Activated B cell treated with CpG ODN at 0.5 μM for 24 hours (primary cell): ENCODE measurements at regions of chr12 and their contacts with region 1.

Region 1: GRCh38 chr12:46675736-46676135 is 150.1 kb downstream of the SLC38A4 start:
- DNase-seq: no peak
- ATAC-seq: no peak
- H3K4me3 Mint-ChIP-seq: no peak overlapping the region
- H3K27ac Mint-ChIP-seq: no peak overlapping the region
- H3K4me1 Mint-ChIP-seq: no peaks in the 10 kb centered on the region
- H3K27me3 Mint-ChIP-seq: no peaks in the 10 kb centered on the region
- CTCF ChIP-seq: peak; percentile 31

Region 2: GRCh38 chr12:45872446-45872845 is 803.3 kb before region 1 on chr12:
- CTCF ChIA-PET with region 1: no interaction called
- POLR2A ChIA-PET with region 1: no interaction called
- intact Hi-C with region 1: no loop called
- DNase-seq: no peak
- ATAC-seq: no peak
- H3K4me3 Mint-ChIP-seq: no peak overlapping the region
- H3K27ac Mint-ChIP-seq: no peak overlapping the region
- H3K4me1 Mint-ChIP-seq: peaks cover 8% of the 10 kb centered on the region
- H3K27me3 Mint-ChIP-seq: no peaks in the 10 kb centered on the region
- CTCF ChIP-seq: no peak

Region 3: DNA sequence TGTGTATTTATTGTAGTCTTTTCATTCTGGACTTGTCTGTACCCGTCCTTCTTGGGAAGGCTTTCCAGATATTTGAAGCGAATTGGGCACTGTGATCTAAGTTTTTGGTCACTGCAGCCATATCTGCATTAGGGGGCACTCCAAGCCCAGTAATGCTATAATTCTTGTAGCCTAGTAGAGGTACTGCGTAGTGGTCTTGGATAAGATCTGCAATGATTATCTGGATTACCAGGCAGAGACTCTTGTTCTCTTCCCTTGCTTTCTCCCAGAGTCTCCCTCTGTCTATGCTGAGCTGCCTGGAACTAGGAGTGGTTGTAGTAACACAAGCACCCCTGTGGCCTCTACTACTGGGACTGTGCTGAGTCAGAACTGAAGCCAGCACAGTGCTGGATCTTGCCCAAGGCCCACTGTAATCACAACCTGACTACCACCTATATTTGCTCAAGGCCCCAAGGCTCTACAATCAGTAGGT is 333.1 kb before region 1 on chr12:
- CTCF ChIA-PET with region 1: no interaction called
- POLR2A ChIA-PET with region 1: no interaction called
- intact Hi-C with region 1: loop called (anchors 1 kb)
- DNase-seq: no peak
- ATAC-seq: peak; percentile 56
- H3K4me3 Mint-ChIP-seq: no peak overlapping the region
- H3K27ac Mint-ChIP-seq: no peak overlapping the region
- H3K4me1 Mint-ChIP-seq: peaks cover 2% of the 10 kb centered on the region
- H3K27me3 Mint-ChIP-seq: peaks cover 5% of the 10 kb centered on the region
- CTCF ChIP-seq: no peak

Region 4: DNA sequence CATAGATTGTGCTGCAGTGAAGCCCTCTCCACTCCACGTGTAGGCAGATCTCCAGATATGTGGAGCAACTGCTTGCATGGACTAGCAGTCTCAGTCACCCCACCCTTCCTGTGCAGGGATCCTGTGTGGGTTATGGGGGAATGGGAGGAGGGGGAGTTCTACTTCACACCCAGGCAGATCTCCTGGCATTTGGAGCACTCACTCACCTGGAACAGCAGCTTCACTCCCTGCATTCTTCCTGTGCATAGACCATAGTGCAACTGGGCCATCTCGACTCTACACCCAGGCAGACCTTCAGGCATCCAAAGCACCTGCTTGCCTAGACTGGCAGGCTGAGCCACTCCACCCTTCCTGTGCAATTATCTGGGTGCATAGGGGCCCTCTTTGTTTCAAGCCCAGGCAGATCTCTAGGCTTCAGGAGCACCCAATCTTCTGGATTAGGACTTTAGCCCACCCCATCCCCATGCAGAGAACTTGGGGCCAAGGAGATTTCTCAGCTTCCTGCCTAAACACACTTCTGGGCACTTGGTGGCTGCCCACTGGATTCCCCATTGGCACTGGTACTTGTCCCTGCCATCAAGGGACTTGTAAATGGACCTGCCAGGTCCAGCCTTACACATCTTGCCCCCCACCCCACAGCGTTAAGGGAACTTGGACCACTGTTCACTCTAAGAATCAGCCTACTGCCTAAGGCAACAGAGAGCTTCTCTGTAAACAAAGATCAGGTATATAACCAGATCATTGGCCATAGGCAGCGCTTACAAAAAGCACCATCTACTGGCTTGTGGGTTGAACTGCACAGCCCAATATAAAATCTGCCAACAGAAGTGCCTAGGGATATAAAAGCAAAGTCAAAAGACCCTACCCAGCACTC is 307.9 kb after region 1 on chr12:
- CTCF ChIA-PET with region 1: no interaction called
- POLR2A ChIA-PET with region 1: no interaction called
- intact Hi-C with region 1: loop called (anchors 5 kb)
- DNase-seq: no peak
- ATAC-seq: peak; percentile 56
- H3K4me3 Mint-ChIP-seq: no peak overlapping the region
- H3K27ac Mint-ChIP-seq: no peak overlapping the region
- H3K4me1 Mint-ChIP-seq: peaks cover 7% of the 10 kb centered on the region
- H3K27me3 Mint-ChIP-seq: peaks cover 14% of the 10 kb centered on the region
- CTCF ChIP-seq: peak; percentile 28

Region 5: DNA sequence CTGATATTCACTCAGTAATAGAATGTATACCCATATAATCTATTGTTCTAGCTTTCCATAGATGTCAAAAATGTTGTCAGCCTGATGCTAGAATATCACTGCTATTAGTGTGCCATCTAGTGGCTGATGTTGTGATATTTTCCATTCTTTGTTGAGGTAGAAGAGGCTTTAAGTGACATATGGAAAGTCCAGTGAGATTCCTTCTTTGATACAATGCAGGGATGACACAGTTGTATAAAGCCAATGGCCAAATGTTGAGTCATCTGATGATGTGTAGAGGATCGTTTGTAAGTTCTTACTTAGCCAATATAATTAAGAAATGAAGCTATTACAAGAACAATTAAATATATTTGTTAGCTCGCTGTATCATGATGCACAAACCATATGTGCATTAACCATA is 345.6 kb after region 1 on chr12:
- CTCF ChIA-PET with region 1: interaction called, 9 read pairs
- POLR2A ChIA-PET with region 1: no interaction called
- intact Hi-C with region 1: loop called (anchors 2 kb)
- DNase-seq: no peak
- ATAC-seq: no peak
- H3K4me3 Mint-ChIP-seq: no peak overlapping the region
- H3K27ac Mint-ChIP-seq: no peak overlapping the region
- H3K4me1 Mint-ChIP-seq: no peaks in the 10 kb centered on the region
- H3K27me3 Mint-ChIP-seq: peaks cover 3% of the 10 kb centered on the region
- CTCF ChIP-seq: peak; percentile 52

Region 6: GRCh38 chr12:47408171-47408871 is 732.6 kb after region 1 on chr12:
- CTCF ChIA-PET with region 1: no interaction called
- POLR2A ChIA-PET with region 1: no interaction called
- intact Hi-C with region 1: loop called (anchors 10 kb)
- DNase-seq: peak; percentile 46
- ATAC-seq: peak; percentile 97
- H3K4me3 Mint-ChIP-seq: no peak overlapping the region
- H3K27ac Mint-ChIP-seq: peak overlapping the region; percentile 63
- H3K4me1 Mint-ChIP-seq: peaks cover 28% of the 10 kb centered on the region
- H3K27me3 Mint-ChIP-seq: no peaks in the 10 kb centered on the region
- CTCF ChIP-seq: no peak

Region 7: DNA sequence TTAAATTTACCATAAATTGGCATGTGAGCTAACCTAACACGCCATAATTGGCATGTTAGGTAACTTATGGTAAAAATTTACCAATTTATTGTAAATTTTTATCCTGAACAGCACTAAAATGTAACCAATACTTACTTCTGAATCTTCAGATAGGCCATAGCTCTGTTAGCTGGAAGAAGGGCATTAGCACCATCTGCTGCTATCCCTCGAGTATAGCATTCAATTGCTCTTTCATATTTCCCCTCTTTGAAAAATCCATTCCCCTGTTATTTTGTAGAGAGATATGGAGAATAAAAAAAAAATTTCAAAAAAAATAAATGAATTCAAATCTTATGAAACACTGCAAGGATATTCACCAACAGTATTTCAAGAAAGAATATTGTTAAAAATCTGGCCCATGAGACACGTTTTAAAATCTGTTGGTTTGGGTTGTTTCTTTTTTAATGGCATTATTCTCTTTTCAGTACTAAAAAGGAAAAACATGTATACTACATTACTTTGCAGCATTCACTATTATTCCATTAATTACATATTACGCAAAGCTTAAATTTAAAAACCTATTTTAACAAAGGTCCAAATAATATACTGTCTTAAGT is 1011.0 kb after region 1 on chr12:
- CTCF ChIA-PET with region 1: interaction called, 3 read pairs
- POLR2A ChIA-PET with region 1: no interaction called
- intact Hi-C with region 1: loop called (anchors 10 kb)
- DNase-seq: no peak
- ATAC-seq: no peak
- H3K4me3 Mint-ChIP-seq: no peak overlapping the region
- H3K27ac Mint-ChIP-seq: no peak overlapping the region
- H3K4me1 Mint-ChIP-seq: peaks cover 8% of the 10 kb centered on the region
- H3K27me3 Mint-ChIP-seq: no peaks in the 10 kb centered on the region
- CTCF ChIP-seq: peak; percentile 21